Mammary epithelial cell (primary cell): ENCODE measurements at regions of chr10 and their contacts with region 1.

Region 1: GRCh38 chr10:58268870-58269605 is at the start of gene CISD1:
- DNase-seq: peak; percentile 99
- H3K4me3 ChIP-seq: peak within 1 kb of the TSS; percentile 78 to 97 (median 87)
- H3K27ac ChIP-seq: peak within 1 kb of the TSS; percentile 78
- H3K4me1 ChIP-seq: peaks cover 9% of the 10 kb centered on the region
- H3K27me3 ChIP-seq: no peaks in the 10 kb centered on the region
- CTCF ChIP-seq: no peak
- total RNA-seq, gene CISD1: 21.0 to 39.6 TPM

Region 2: GRCh38 chr10:57696641-57697040 is 572.4 kb before region 1 on chr10:
- CTCF ChIA-PET with region 1: no interaction called
- dilution Hi-C with region 1: no loop called
- in situ Hi-C with region 1: no loop called
- intact Hi-C with region 1: loop called (anchors 5 kb)
- DNase-seq: peak; percentile 78
- H3K4me3 ChIP-seq: no peak overlapping the region
- H3K27ac ChIP-seq: peak overlapping the region; percentile 62
- H3K4me1 ChIP-seq: peaks cover 24% of the 10 kb centered on the region
- H3K27me3 ChIP-seq: no peaks in the 10 kb centered on the region
- CTCF ChIP-seq: no peak

Region 3: DNA sequence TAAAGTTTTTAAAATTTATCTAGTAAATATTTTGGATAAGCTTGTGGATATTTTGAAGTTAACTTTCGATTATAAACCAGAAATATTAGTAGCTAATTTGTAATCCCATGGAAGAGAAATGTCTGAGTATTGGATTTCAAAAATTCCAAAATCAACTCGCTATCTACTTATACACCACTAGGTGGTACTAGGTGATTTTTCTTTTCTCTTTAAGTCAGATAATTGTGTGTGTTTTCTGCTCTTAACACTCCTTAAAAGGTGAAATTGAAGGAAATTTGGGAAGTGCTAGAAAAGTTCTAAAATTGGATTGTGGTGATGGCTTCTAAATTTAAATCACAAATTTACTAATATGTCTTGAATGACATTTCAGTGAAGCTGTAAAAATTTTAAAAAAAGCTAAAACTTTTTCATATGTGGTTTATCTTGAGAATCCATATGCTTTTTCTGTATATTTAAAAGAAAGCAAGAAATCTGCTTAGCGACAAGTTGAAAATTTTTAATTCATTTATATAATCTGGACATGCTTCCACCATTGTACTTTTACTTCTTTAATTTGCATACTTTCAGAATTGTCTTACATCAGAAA is 91.6 kb before region 1 on chr10:
- CTCF ChIA-PET with region 1: interaction called, 3 read pairs
- dilution Hi-C with region 1: loop called (anchors 5 kb)
- in situ Hi-C with region 1: no loop called
- intact Hi-C with region 1: loop called (anchors 1 kb)
- DNase-seq: no peak
- H3K4me3 ChIP-seq: no peak overlapping the region
- H3K27ac ChIP-seq: no peak overlapping the region
- H3K4me1 ChIP-seq: peaks cover 18% of the 10 kb centered on the region
- H3K27me3 ChIP-seq: peaks cover 2% of the 10 kb centered on the region
- CTCF ChIP-seq: peak; percentile 55 to 60

Region 4: DNA sequence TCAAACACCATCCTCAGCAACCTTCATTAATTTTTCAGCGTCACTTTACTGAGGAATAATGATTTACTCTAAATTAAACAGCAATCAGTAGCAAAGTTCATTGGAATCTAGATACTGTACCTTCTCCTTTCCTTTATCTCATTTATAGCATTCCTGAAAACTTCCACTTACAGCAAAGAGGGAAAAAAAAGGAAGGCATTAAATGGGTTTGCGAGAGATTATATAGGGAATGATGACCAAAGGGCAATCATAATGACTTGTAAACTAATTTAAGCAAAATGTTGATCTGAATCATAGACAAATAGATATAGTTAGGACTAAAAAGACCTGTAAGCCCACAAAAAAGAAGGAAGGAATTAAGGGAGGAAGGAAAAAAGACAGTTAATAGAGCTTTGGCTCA is 43.4 kb before region 1 on chr10:
- CTCF ChIA-PET with region 1: no interaction called
- dilution Hi-C with region 1: no loop called
- in situ Hi-C with region 1: no loop called
- intact Hi-C with region 1: loop called (anchors 5 kb)
- DNase-seq: no peak
- H3K4me3 ChIP-seq: no peak overlapping the region
- H3K27ac ChIP-seq: no peak overlapping the region
- H3K4me1 ChIP-seq: no peaks in the 10 kb centered on the region
- H3K27me3 ChIP-seq: no peaks in the 10 kb centered on the region
- CTCF ChIP-seq: no peak

Region 5: GRCh38 chr10:58237014-58237830 is 31.8 kb before region 1 on chr10:
- CTCF ChIA-PET with region 1: no interaction called
- dilution Hi-C with region 1: no loop called
- in situ Hi-C with region 1: no loop called
- intact Hi-C with region 1: loop called (anchors 1 kb)
- DNase-seq: peak; percentile 68
- H3K4me3 ChIP-seq: no peak overlapping the region
- H3K27ac ChIP-seq: peak overlapping the region; percentile 19
- H3K4me1 ChIP-seq: peaks cover 34% of the 10 kb centered on the region
- H3K27me3 ChIP-seq: no peaks in the 10 kb centered on the region
- CTCF ChIP-seq: no peak

Region 6: GRCh38 chr10:58291538-58292174 is 22.6 kb after region 1 on chr10:
- CTCF ChIA-PET with region 1: no interaction called
- dilution Hi-C with region 1: no loop called
- in situ Hi-C with region 1: no loop called
- intact Hi-C with region 1: loop called (anchors 1 kb)
- DNase-seq: peak; percentile 42
- H3K4me3 ChIP-seq: no peak overlapping the region
- H3K27ac ChIP-seq: no peak overlapping the region
- H3K4me1 ChIP-seq: no peaks in the 10 kb centered on the region
- H3K27me3 ChIP-seq: no peaks in the 10 kb centered on the region
- CTCF ChIP-seq: peak; percentile 65 to 81